Dendritic cell treated with granulocyte-macrophage colony-stimulating factor and Interleukin-4, amounts not matched to agents 40 ng/mL and 50 ng/mL, for 4 days (primary cell): ENCODE measurements at regions of chr15 and their contacts with region 1.

Region 1: GRCh38 chr15:90451053-90451850 is 63.2 kb downstream of the IQGAP1 start:
- H3K4me3 Mint-ChIP-seq: no peak overlapping the region
- H3K27ac Mint-ChIP-seq: no peak overlapping the region
- H3K4me1 Mint-ChIP-seq: peaks cover 7% of the 10 kb centered on the region
- H3K27me3 Mint-ChIP-seq: no peaks in the 10 kb centered on the region

Region 2: DNA sequence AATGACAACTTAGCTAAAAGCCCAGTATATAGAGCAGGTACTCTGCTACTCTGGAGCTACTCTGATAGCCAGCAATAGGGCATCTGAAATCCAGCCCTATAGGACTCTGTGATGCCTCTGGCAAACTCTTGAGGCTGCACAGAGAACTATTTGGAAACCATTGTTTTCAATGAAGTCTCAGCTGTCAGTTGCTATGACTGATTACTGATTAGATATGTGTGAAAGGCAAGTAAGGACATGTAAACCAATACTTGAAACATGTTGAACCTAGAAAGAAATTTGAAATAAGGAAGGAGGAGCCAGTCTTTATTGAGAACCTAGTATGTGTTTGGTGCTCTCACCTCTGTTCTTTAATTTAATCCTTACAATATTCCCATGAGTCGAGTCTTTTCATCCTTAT is 38.3 kb after region 1 on chr15:
- intact Hi-C with region 1: loop called (anchors 5 kb)
- H3K4me3 Mint-ChIP-seq: no peak overlapping the region
- H3K27ac Mint-ChIP-seq: no peak overlapping the region
- H3K4me1 Mint-ChIP-seq: no peaks in the 10 kb centered on the region
- H3K27me3 Mint-ChIP-seq: no peaks in the 10 kb centered on the region